ENCODE measurements at regions of chr4 and their contacts with region 1.

Region 1: GRCh38 chr4:1899149-1900086 is 28.2 kb downstream of the NSD2 start:
- DNase-seq: peak; percentile 85
- ATAC-seq: peak; percentile 94
- H3K4me3 Mint-ChIP-seq: no peak overlapping the region
- H3K27ac Mint-ChIP-seq: peak overlapping the region; percentile 79
- H3K4me1 Mint-ChIP-seq: peaks cover 72% of the 10 kb centered on the region
- H3K27me3 Mint-ChIP-seq: no peaks in the 10 kb centered on the region

Region 2: DNA sequence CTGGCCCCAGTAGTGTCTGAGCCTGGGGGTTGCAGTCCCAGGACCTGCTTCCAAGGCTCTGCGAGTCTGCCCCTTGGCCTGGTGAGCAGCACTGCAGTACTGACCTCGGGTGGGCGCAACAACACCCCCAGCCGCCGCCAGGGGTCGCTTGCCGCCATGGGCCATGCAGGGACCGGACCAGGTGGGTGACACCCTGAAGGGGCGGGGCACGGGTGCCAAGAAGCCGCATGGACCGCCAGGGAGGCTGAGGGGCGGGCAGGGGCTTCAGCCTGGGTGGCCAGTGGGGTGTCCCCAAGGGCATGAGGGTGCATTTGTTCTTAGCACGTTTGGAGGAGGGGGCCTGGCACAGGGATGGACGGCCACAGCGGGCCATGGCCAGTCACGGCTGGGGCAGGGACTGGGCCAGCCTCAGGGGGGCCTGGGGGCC is 153.1 kb before region 1 on chr4:
- CTCF ChIA-PET with region 1: interaction called, 23 read pairs
- POLR2A ChIA-PET with region 1: no interaction called
- DNase-seq: peak; percentile 88
- ATAC-seq: peak; percentile 78
- H3K4me3 Mint-ChIP-seq: no peak overlapping the region
- H3K27ac Mint-ChIP-seq: no peak overlapping the region
- H3K4me1 Mint-ChIP-seq: peaks cover 2% of the 10 kb centered on the region
- H3K27me3 Mint-ChIP-seq: no peaks in the 10 kb centered on the region

Region 3: DNA sequence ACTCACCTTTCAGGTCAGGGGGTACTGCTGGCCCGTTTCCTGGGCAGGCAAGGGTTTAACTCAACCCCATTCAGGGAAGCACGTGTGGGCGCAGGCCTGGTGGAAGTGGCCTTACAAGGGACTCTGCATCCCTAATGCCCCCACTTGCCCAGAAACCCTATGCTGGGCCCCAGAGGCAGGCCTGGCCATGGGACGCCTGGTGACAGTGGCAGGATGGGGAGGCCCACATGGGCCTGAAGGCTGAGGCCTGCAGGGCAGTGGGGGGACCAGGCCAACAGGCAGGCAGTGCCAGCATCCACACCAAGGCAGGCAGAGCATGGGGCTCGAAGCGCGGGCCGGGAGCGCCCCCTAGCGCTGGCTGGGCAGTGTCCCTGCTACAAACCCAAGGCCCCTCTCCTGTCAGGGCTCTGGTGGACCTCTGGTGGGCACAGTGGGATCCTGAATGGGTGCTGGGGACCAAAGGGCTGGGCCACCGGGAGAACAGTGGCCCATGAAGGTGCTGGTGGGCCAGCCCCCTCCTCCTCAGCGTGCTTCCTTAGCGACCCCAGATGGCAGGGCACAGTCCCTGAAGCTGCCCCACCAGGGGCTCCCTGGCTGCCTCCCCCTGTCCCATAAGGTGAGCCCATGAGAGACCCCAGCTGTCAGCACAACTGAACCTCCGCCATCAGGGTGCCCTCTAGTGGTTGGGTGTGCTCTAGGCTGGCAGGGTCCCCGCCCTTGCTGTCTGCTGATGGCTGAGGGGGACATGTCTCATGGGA is 89.5 kb before region 1 on chr4:
- CTCF ChIA-PET with region 1: interaction called, 12 read pairs
- POLR2A ChIA-PET with region 1: no interaction called
- DNase-seq: peak; percentile 75
- ATAC-seq: peak; percentile 88
- H3K4me3 Mint-ChIP-seq: no peak overlapping the region
- H3K27ac Mint-ChIP-seq: no peak overlapping the region
- H3K4me1 Mint-ChIP-seq: no peaks in the 10 kb centered on the region
- H3K27me3 Mint-ChIP-seq: no peaks in the 10 kb centered on the region

Region 4: GRCh38 chr4:1856042-1856788 is 43.2 kb before region 1 on chr4 and contains the start of gene LETM1:
- CTCF ChIA-PET with region 1: interaction called, 16 read pairs
- POLR2A ChIA-PET with region 1: no interaction called
- DNase-seq: peak; percentile 94
- ATAC-seq: peak; percentile 92
- H3K4me3 Mint-ChIP-seq: peak within 1 kb of the TSS; percentile 81
- H3K27ac Mint-ChIP-seq: peak within 1 kb of the TSS; percentile 84
- H3K4me1 Mint-ChIP-seq: peaks cover 50% of the 10 kb centered on the region
- H3K27me3 Mint-ChIP-seq: no peaks in the 10 kb centered on the region
- total RNA-seq, gene LETM1: 56.6 to 58.9 TPM

Region 5: DNA sequence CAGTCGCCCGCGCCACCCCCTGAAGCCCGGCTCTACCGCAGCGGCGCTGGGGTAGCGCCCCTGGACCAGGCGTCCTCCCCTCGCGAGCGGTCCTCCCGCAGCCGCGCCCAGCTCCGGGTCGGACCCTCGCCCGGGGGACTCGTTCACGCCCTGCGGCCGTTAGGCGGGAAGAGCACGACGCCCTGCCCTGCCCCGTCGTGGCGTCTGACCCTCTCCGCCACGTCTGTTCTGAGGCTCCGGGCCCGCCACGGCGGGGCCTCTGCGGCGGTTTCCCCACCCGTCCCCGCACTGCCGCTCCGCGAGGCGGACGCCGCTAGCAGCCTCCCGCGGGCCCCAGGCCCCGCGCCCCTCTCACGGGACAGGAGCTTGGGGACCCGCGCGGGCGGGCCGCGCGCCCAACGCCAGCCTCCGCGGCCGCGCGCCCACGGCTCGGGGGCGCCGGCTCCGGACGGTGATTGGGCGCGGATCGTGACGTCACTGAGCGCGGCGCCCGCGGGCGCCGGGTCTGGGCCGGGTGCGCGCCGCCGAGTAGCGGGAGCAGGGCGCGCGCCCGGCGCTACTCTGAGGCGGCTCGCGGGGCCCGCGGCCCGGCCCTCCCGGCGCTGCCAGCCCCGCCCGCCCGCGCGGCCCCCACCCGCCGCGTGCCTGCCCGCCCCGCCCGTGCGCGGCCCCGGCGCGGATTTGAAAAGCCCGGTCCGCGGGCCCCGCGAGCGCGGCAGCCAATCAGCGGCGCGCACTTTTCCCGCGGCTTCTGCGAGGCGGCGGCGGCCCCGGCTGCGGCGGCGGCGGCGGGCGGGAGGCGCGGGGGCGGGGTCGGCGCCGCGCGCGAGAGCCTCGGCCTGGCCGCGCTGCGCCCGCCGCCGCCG is 28.6 kb before region 1 on chr4 and contains the start of gene NSD2:
- CTCF ChIA-PET with region 1: interaction called, 24 read pairs
- POLR2A ChIA-PET with region 1: interaction called, 14 read pairs
- DNase-seq: peak; percentile 91
- ATAC-seq: peak; percentile 65
- H3K4me3 Mint-ChIP-seq: peak within 1 kb of the TSS; percentile 90
- H3K27ac Mint-ChIP-seq: peak within 1 kb of the TSS; percentile 99
- H3K4me1 Mint-ChIP-seq: peaks cover 39% of the 10 kb centered on the region
- H3K27me3 Mint-ChIP-seq: no peaks in the 10 kb centered on the region
- total RNA-seq, gene NSD2: 287 to 290 TPM

Region 6: GRCh38 chr4:1883583-1883982 is 15.8 kb before region 1 on chr4:
- CTCF ChIA-PET with region 1: interaction called, 64 read pairs
- POLR2A ChIA-PET with region 1: interaction called, 3 read pairs
- DNase-seq: no peak
- ATAC-seq: no peak
- H3K4me3 Mint-ChIP-seq: no peak overlapping the region
- H3K27ac Mint-ChIP-seq: no peak overlapping the region
- H3K4me1 Mint-ChIP-seq: peaks cover 58% of the 10 kb centered on the region
- H3K27me3 Mint-ChIP-seq: no peaks in the 10 kb centered on the region

Region 7: GRCh38 chr4:1910643-1911042 is 11.2 kb after region 1 on chr4:
- CTCF ChIA-PET with region 1: interaction called, 42 read pairs
- POLR2A ChIA-PET with region 1: interaction called, 7 read pairs
- DNase-seq: peak; percentile 37
- ATAC-seq: no peak
- H3K4me3 Mint-ChIP-seq: no peak overlapping the region
- H3K27ac Mint-ChIP-seq: peak overlapping the region; percentile 22
- H3K4me1 Mint-ChIP-seq: peaks cover 50% of the 10 kb centered on the region
- H3K27me3 Mint-ChIP-seq: no peaks in the 10 kb centered on the region

Measured in activated CD8-positive, alpha-beta T cell treated with anti-CD3 and anti-CD28 coated beads, Interleukin-2, amount 10 ng/mL, durations not matched to agents 7 days and 5 days (primary cell).